Prostate gland (tissue), 2 donors: ENCODE measurements at regions of chr9 and their contacts with region 1.

Region 1: GRCh38 chr9:38160613-38161215 is 91.7 kb upstream of the SHB start:
- DNase-seq: no peak
- H3K4me3 ChIP-seq: no peak overlapping the region
- H3K27ac ChIP-seq: no peak overlapping the region
- H3K4me1 ChIP-seq: peaks cover 10% of the 10 kb centered on the region
- H3K27me3 ChIP-seq: no peaks in the 10 kb centered on the region
- CTCF ChIP-seq: peak in 3 of 4 experiments; percentile 24 to 60 (median 55)
- POLR2A ChIP-seq: no peak

Region 2: GRCh38 chr9:37430841-37431597 is 729.7 kb before region 1 on chr9:
- intact Hi-C with region 1: no loop called
- DNase-seq: no peak
- H3K4me3 ChIP-seq: no peak overlapping the region
- H3K27ac ChIP-seq: no peak overlapping the region
- H3K4me1 ChIP-seq: no peaks in the 10 kb centered on the region
- H3K27me3 ChIP-seq: no peaks in the 10 kb centered on the region
- CTCF ChIP-seq: no peak
- POLR2A ChIP-seq: no peak

Region 3: GRCh38 chr9:38214432-38214831 is 53.7 kb after region 1 on chr9:
- intact Hi-C with region 1: loop called (anchors 10 kb)
- DNase-seq: no peak
- H3K4me3 ChIP-seq: no peak overlapping the region
- H3K27ac ChIP-seq: no peak overlapping the region
- H3K4me1 ChIP-seq: no peaks in the 10 kb centered on the region
- H3K27me3 ChIP-seq: no peaks in the 10 kb centered on the region
- CTCF ChIP-seq: no peak
- POLR2A ChIP-seq: no peak